ENCODE measurements at regions of chr17 and their contacts with region 1.

Region 1: DNA sequence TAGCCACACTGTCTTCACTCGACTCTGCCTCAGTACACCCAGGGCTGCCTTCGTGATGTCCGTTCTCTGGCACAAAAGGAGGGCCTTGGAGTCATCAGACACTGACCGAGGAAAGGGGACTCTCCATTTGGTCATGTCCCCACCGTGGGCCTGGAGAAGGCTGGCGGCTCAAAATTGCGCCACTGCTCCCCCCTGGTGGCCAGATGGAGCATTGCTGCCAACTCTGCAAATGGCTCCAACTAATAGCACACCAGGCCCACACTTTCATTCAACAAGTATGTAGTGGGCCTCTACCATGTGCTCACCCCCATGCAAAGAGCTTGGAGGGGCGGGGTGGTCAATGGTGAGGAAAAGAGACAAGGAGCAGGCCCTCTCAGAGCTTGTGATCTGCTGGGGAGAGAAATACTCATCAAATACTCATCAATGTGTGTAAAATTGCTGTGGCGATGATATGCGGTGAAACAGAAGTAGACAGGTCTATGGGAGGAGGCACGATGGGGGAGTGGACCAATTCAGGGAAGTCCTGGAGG is 5.2 kb upstream of the GRIN2C start:
- DNase-seq: peak; percentile 71
- H3K4me3 Mint-ChIP-seq: no peak overlapping the region
- H3K27ac Mint-ChIP-seq: no peak overlapping the region
- H3K4me1 Mint-ChIP-seq: peaks cover 19% of the 10 kb centered on the region
- H3K27me3 Mint-ChIP-seq: peaks cover 17% of the 10 kb centered on the region

Region 2: DNA sequence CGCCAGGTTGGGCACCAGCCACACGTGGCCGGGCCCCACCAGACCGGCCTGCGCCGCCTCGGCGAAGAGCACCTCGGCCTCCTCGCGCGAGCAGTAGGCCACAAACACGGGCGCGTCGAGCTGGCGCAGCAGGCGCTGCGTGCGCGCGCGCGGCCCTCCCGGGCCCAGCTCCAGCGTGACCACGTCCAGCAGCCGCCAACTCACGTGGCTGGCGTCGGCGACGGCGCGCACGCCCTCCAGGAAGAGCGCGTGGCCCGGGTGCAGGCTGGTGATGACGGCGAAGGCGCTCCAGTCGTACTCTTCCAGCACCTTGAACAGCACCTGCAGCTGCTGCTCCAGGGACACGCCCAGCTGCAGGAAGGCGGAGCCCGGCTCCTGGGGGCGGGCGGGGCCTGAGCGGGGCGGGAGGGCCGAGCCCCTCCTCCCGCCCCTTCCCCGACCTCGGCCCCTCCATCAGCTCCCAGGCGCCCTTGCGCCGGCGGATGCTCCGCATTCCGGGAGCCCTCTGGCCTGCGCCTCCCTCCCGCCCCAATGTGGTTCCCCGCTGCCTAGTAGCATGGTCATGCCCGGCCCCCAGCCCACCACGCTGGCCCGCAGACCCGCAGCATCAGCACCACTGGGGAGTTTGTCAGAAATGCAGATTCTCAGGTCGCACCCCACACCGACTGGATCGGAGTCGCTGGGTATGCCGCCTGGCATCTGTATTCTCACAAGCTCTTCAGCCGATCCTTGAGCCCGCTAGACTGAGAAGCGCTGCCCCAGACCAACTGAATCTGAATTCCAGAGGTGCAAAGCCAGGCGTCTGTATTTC is 12.5 kb before region 1 on chr17:
- CTCF ChIA-PET with region 1: interaction called, 30 read pairs
- POLR2A ChIA-PET with region 1: interaction called, 6 read pairs
- DNase-seq: peak; percentile 75
- H3K4me3 Mint-ChIP-seq: peak overlapping the region; percentile 71
- H3K27ac Mint-ChIP-seq: no peak overlapping the region
- H3K4me1 Mint-ChIP-seq: peaks cover 14% of the 10 kb centered on the region
- H3K27me3 Mint-ChIP-seq: peaks cover 51% of the 10 kb centered on the region